GM18951 (cell line): ENCODE measurements at regions of chr6 and their contacts with region 1.

Region 1: DNA sequence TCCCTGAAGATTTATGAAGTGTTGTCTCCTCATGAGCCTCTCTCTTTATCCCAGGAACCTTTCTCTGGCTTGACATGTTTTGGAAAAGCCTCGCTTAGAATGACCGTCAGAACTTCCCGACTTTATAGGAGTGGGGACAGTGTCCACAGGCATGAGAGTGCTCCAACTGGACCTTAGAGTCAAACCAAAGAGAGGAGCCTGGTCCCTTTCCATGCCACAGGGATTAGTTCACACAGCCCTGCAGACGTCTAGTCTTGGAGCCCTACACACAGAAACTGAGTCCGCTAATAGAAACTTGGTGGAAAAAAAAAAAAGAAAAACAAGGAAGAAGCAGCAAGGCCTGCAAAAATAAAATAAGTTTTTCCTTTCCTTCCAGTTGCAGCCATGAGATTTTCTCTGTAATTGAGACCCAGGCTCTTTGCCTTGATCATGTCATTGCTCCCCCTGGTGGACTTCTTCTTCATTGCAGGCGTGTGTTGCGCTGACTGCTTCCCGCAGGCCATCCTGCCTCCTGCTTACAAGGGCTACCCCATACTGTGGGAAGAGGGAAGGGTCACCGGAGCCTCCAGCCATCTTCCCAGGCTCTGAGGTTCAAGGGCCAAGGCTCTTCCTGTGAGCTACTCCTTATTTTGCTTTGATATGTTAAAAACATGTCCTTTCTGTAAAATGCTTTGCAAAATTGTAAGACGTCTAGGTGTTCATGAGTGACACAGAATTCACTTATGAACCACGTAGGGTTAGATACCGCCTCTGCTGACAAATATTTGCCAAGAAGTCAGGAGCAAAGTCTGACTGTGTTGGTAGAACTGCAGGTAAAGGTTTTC is 201.0 kb downstream of the UST start:
- POLR2A ChIP-seq: no peak

Region 2: DNA sequence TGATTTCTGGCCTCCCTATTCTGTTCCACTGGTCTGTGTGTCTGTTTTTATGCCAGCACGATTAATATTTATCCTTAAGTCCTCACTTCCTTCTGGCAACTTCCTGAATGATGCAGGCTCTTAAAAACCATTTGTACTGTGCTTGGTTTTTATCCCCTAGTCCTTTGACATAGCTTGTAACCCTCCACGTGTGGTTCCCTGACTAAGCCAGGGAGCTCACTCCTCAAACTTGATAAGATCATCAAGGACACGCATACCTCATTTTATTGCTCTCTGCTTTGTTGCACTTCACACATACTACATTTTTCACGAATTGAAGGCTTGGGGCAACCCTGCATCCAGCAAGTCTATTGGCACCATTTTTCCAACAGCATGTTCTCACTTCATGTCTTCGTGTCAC is 367.4 kb before region 1 on chr6:
- in situ Hi-C with region 1: loop called (anchors 10 kb)
- POLR2A ChIP-seq: no peak

Region 3: GRCh38 chr6:148818939-148819583 is 128.8 kb before region 1 on chr6:
- in situ Hi-C with region 1: no loop called
- POLR2A ChIP-seq: no peak